PC-3 (cell line): ENCODE measurements at regions of chr12 and their contacts with region 1.

Region 1: DNA sequence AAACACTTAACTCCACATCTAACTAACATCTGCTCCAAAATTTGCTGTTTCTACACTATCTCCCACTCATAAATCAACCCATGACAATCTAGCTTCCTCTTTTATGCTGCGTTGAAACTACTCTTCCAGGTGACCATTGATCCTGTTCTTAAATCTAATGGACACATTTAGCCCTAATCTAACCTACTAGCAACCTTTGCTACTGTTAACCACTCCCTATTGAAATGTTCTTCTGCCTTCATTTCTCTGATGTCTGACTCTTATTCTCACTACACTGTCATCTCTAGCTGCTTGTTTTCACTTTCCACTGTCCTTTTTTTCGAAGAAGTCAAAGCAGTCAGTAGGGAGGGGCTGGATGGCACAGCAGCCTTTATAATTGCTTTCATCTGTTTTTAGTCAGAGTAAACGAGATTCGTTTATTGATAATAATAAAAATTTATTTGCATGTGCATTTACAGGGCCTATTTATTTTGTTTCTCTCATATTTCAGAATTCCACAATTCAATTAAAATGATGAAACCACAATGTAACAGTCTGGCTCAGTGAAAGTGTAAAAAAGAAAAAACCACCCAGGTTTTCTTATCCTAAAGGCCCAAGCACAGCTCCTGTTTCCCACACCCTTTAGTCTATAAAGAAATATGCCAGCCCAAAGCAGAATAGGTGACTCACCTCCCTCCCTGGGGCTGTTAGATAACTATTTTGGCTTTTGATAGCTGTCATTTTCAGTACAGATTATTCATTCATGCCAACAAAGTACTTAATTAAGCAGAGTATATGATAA is 44.9 kb downstream of the ATP2B1 start:
- DNase-seq: peak; percentile 66
- ATAC-seq: peak; percentile 86
- H3K4me3 ChIP-seq: no peak overlapping the region
- H3K27ac ChIP-seq: peak overlapping the region; percentile 38
- H3K4me1 ChIP-seq: peaks cover 18% of the 10 kb centered on the region
- H3K27me3 ChIP-seq: no peaks in the 10 kb centered on the region
- CTCF ChIP-seq: no peak

Region 2: DNA sequence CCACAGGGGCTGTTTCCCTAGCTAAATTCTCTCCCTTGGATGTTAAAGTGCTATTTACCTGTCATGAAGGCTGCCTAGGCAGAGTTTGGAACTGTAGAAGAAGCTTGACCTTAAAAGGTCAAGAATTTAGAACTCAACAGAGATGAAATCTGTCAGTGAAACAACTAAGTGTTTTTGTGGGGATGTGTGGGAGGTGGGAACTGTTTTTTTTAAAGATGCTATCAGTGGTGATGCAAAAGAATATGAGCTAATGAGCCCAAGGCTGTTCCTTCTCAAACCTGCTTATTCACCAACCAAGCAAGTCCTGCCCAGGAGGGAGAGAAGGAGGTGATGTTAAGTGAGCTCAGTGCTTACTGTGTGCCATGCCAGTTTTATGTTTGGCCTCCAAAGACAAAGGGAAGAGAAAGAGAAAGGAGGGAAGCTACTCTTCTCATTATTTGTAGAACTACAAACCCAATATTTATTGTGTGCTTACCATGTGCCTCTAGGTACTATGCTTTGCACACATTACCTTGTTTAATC is 97.1 kb before region 1 on chr12:
- CTCF ChIA-PET with region 1: no interaction called
- POLR2A ChIA-PET with region 1: no interaction called
- intact Hi-C with region 1: no loop called
- DNase-seq: no peak
- ATAC-seq: no peak
- H3K4me3 ChIP-seq: no peak overlapping the region
- H3K27ac ChIP-seq: no peak overlapping the region
- H3K4me1 ChIP-seq: no peaks in the 10 kb centered on the region
- H3K27me3 ChIP-seq: no peaks in the 10 kb centered on the region
- CTCF ChIP-seq: no peak

Region 3: DNA sequence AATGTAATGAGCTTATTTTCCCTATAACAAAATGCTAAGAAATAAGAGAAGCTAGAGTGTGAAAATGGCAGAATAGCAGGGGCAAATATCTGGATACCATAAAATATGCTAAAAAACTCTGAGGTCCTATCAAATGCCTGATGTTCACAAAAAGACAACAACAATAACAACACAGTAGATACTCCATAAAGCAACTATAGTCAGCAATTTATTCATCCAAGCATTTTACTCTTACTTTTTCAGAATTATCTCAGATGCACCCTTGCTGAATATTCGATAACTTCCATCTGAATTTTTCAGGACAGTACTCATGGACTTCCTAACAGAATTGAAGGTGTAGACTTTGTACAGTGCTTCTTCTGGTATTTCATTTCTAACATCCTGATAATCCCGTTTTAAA is 44.0 kb before region 1 on chr12:
- CTCF ChIA-PET with region 1: no interaction called
- POLR2A ChIA-PET with region 1: interaction called, 38 read pairs
- intact Hi-C with region 1: no loop called
- DNase-seq: no peak
- ATAC-seq: no peak
- H3K4me3 ChIP-seq: no peak overlapping the region
- H3K27ac ChIP-seq: no peak overlapping the region
- H3K4me1 ChIP-seq: 0 out of 2 replicates have a peak, but pooled peaks cover 6% of the 10 kb centered on the region
- H3K27me3 ChIP-seq: no peaks in the 10 kb centered on the region
- CTCF ChIP-seq: no peak